GM18951 (cell line): ENCODE measurements at regions of chr17 and their contacts with region 1.

Region 1: DNA sequence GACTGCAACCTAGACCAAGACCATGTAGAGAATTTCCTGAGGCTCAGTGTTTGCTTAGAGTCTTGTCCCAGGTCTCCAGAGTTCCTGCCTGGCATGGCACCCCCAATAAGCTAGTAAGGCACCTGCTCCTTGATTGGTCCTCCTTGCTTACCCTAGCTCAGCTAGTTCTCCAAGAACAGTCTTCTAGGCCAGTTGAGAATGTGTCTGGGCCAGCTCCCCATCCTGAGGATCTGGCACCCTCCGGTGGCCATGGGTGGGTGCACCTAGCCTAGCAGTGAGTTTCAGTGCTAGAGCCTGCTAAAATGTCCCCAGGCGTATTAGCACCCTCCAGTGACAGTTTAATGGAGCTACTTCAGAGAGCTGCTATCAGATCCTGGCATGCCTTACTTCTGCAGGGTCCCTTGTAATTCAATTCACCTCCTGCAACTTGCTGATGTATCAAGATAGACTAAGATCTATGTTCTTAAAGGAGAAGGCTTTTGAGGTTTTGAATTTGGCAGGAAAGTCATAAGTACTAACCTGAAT is 44.4 kb upstream of the MED13 start:
- POLR2A ChIP-seq: no peak

Region 2: GRCh38 chr17:61635913-61636432 is 473.5 kb before region 1 on chr17:
- in situ Hi-C with region 1: loop called (anchors 10 kb)
- POLR2A ChIP-seq: no peak

Region 3: DNA sequence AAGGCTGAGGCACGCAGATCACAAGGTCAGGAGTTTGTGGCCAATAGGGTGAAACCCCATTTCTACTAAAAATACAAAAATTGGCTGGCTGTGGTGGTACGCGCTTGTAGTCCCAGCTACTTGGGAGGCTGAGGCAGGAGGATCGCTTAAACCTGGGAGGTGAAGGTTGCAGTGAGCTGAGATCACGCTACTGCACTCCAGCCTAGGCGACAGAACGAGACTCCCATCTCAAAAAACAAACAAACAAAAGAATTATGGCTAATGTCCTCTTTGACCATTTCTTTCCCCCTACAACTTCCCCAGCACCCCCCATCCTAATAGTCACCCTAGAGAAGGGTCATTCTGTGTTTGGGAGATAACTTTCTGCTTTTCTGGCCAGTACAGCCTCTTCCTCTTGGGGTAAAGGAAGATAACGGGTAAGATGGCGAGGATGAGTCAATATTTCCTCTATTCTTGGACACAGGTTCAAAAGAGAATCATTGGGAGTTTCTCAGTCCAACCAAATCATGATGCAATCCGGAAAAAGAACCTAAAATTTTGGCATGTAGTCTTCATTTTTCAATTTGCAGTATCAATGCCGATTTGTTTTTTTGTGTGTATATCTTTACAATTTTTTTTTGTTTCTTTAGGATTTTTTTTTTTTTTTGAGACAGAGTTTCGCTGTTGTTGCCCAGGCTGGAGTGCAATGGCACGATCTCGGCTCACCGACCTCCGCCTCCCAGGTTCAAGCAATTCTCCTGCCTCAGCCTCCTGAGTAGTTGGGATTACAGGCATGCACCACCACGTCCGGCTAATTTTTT is 63.3 kb after region 1 on chr17:
- in situ Hi-C with region 1: no loop called
- POLR2A ChIP-seq: no peak

Region 4: DNA sequence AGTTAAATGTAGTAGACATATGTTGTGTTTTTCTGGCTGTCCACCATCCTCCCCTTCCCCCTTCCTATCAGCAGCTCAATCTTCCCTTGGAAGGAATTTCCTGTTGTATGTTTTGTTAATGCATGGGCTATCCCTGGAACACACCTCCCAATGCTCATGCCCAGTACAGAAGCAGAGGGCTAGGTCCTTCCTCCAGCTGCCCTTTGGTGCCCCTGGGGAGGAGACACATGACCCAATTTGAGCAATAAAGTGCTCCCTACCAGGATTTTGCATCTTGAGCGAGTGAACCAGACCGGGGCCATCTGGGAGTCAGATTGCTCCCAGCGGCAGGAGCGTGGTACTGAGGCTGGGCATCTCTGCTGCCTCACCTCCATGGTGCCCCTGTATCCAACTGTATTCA is 97.1 kb after region 1 on chr17:
- in situ Hi-C with region 1: no loop called
- POLR2A ChIP-seq: no peak